K562 (cell line): ENCODE measurements at regions of chr15 and their contacts with region 1.

Region 1: DNA sequence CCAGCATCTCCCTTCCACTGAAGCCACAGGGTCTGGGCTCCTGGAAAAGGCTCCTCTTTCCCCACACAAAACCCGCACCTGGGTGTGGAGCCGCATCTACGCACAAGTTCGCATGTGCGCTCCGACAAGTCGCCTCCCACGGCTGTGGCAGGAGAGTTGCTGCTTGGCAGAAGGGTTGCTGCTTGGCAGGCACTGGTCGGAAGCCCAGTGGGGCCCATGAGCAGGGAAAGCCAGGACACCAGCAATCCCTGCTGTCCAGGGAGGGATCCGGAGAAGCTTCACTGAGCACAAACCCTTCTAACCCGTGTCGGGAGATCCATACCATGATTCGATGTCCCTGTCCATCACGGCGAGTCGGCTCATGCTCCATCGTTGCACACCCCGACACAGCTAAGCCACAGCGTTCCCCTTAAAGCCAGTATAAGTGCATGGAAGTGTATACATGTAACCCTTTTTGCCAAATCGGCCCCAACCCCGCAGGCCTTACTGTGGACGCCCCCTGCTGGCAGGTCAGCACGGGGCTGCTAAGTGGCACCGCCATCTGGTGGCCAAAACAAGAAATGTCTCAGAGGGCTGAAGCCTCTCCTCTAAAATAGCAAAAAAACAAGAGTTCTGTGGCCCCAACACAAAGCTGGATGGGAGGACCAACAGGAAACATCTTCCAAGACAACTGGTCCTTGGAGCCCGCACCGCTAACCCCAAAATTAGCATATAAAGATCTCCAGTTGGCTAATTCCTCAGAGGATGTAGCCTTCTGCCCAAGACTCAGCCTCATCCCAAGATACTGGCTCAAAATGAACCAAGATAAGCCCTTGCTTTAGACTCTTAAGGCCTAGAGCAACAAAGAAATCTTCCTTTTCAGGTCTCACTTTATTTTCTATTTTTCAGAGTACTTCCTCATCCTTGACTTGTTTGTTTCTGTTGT is 8.3 kb downstream of the ANKRD63 start:
- DNase-seq: peak; percentile 79 to 91 (median 82)
- ATAC-seq: peak; percentile 78
- H3K4me3 ChIP-seq: no peak overlapping the region
- H3K27ac ChIP-seq: no peak overlapping the region
- H3K4me1 ChIP-seq: peaks cover 13 to 38% of the 10 kb centered on the region in 2 experiments
- H3K27me3 ChIP-seq: peaks cover 0 to 16% of the 10 kb centered on the region in 2 experiments; a peak in 2 of 5 replicates
- CTCF ChIP-seq: peak; percentile 100
- EP300 ChIP-seq: 0 out of 2 replicates have a peak, but pooled peaks have one; percentile 13
- POLR2A ChIP-seq: no peak
- RAD21 ChIP-seq: peak; percentile 99 to 100

Region 2: GRCh38 chr15:40029979-40030893 is 244.4 kb before region 1 on chr15:
- CTCF ChIA-PET with region 1: interaction called, 10 read pairs
- POLR2A ChIA-PET with region 1: interaction called, 5 read pairs
- in situ Hi-C with region 1: no loop called
- intact Hi-C with region 1: no loop called
- DNase-seq: peak; percentile 37 to 59 (median 40)
- ATAC-seq: peak; percentile 92
- H3K4me3 ChIP-seq: no peak overlapping the region
- H3K27ac ChIP-seq: no peak overlapping the region
- H3K4me1 ChIP-seq: no peaks in the 10 kb centered on the region
- H3K27me3 ChIP-seq: no peaks in the 10 kb centered on the region
- CTCF ChIP-seq: peak; percentile 67 to 78 (median 74)
- EP300 ChIP-seq: no peak
- POLR2A ChIP-seq: no peak
- RAD21 ChIP-seq: peak in 1 of 2 experiments; percentile 60; a peak in 3 of 4 replicates

Region 3: DNA sequence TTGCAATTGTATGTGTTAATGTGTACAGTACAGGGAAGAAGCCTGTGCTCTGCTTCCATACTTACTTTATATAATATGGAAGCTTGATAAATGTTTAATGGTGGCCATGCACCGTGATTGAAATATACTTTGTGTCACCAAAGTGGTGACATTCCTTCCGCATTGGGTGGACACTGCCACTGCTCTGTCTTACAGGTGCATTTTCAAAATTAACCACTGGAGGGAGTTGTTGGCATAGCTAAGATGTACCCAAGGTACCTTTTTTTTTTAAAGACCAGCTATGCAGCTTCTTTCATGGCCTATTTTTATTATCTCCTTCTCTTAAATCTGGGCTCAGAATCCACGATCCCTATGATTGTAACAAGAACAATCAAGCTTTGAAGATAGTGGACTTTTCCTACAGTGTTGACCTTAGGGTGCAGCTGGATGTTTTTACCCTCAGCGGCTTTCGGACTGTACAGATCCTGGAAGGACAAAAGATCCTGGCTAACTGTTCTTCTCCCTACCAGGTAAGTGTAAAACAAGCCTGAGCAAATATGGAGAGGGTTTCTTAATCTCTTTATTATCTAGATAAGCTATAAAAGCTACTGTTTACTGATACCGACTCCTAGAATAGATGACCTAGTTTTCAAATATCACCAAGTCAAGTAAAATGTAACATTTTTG is 57.3 kb before region 1 on chr15:
- CTCF ChIA-PET with region 1: interaction called, 218 read pairs
- POLR2A ChIA-PET with region 1: interaction called, 11 read pairs
- in situ Hi-C with region 1: loop called (anchors 5 kb)
- intact Hi-C with region 1: loop called (anchors 1 kb)
- DNase-seq: peak; percentile 63 to 79 (median 67)
- ATAC-seq: peak; percentile 96
- H3K4me3 ChIP-seq: no peak overlapping the region
- H3K27ac ChIP-seq: no peak overlapping the region
- H3K4me1 ChIP-seq: no peaks in the 10 kb centered on the region
- H3K27me3 ChIP-seq: no peaks in the 10 kb centered on the region
- CTCF ChIP-seq: peak; percentile 80 to 97 (median 93)
- EP300 ChIP-seq: no peak
- POLR2A ChIP-seq: no peak
- RAD21 ChIP-seq: peak; percentile 89 to 90

Region 4: GRCh38 chr15:40293905-40294895 is 19.6 kb after region 1 on chr15:
- CTCF ChIA-PET with region 1: no interaction called
- POLR2A ChIA-PET with region 1: no interaction called
- in situ Hi-C with region 1: no loop called
- intact Hi-C with region 1: no loop called
- DNase-seq: no peak
- ATAC-seq: no peak
- H3K4me3 ChIP-seq: no peak overlapping the region
- H3K27ac ChIP-seq: no peak overlapping the region
- H3K4me1 ChIP-seq: peaks cover 0 to 31% of the 10 kb centered on the region in 2 experiments; a peak in 3 of 5 replicates
- H3K27me3 ChIP-seq: peaks cover 3 to 41% of the 10 kb centered on the region in 2 experiments; a peak in 4 of 5 replicates
- CTCF ChIP-seq: no peak
- EP300 ChIP-seq: no peak
- POLR2A ChIP-seq: no peak
- RAD21 ChIP-seq: no peak

Region 5: GRCh38 chr15:40307421-40308211 is 33.0 kb after region 1 on chr15 and contains the start of gene PLCB2:
- CTCF ChIA-PET with region 1: interaction called, 87 read pairs
- POLR2A ChIA-PET with region 1: interaction called, 4 read pairs
- in situ Hi-C with region 1: loop called (anchors 5 kb)
- intact Hi-C with region 1: loop called (anchors 1 kb)
- DNase-seq: peak; percentile 46 to 55 (median 52)
- ATAC-seq: peak; percentile 69
- H3K4me3 ChIP-seq: no peak within 1 kb of the TSS
- H3K27ac ChIP-seq: peak within 1 kb of the TSS; percentile 66
- H3K4me1 ChIP-seq: peaks cover 22 to 36% of the 10 kb centered on the region in 2 experiments
- H3K27me3 ChIP-seq: peaks cover 0 to 13% of the 10 kb centered on the region in 2 experiments; a peak in 2 of 5 replicates
- CTCF ChIP-seq: peak; percentile 39 to 52 (median 40); a peak in 5 of 6 replicates
- EP300 ChIP-seq: no peak
- POLR2A ChIP-seq: no peak
- RAD21 ChIP-seq: peak in 1 of 2 experiments; percentile 6; a peak in 1 of 4 replicates
- polyA plus RNA-seq, gene PLCB2: 0.37 to 0.59 TPM

Region 6: DNA sequence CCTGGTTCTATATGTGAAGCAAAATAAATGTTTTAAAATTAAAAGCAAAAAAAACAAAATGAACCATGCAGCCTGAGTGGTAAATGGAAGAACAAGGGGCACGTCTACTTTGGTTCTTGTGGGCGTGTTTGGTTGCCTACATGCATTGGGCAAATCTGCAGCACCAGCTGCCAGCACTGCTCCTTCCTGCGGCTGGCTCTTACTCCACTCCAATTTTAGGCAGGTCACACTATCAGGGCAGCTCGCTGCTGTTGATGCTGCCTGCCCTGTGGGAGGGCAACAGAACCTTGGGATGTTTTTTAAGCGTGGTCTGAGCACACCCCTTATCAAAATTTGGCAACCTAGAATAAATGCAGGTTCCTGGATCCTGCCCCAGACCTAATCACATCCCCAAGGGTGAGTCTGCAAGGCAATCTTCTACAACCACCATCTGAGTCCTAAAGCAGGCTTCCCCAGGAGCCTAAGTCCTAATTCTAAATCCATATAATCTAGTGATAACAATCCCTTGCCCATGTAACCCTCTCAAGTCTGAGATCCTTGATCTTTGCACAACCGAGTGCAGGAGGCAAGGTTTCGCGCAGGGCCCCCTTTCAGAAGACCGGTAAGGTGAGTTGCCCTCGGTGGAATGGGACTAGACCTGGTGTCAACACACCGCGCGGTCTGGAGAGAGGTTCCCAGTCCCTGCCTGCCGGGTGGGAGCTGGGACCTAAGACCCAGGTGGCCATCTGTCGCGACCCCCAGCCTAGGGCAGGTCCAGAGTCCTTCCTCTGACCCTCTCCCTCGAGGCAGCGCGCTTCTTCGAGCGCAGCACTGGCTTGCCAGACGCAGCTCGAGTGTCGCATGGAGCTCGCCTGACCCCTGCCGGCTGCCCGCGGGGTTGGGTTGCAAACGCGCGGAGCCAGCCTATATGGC is 146.9 kb after region 1 on chr15:
- CTCF ChIA-PET with region 1: interaction called, 28 read pairs
- POLR2A ChIA-PET with region 1: interaction called, 4 read pairs
- in situ Hi-C with region 1: no loop called
- intact Hi-C with region 1: no loop called
- DNase-seq: peak; percentile 84 to 89 (median 86)
- ATAC-seq: peak; percentile 100
- H3K4me3 ChIP-seq: no peak overlapping the region
- H3K27ac ChIP-seq: no peak overlapping the region
- H3K4me1 ChIP-seq: peaks cover 2 to 14% of the 10 kb centered on the region in 2 experiments; a peak in 4 of 5 replicates
- H3K27me3 ChIP-seq: no peaks in the 10 kb centered on the region
- CTCF ChIP-seq: peak; percentile 93 to 97 (median 94)
- EP300 ChIP-seq: no peak
- POLR2A ChIP-seq: no peak
- RAD21 ChIP-seq: peak; percentile 91 to 95